Naive thymus-derived CD4-positive, alpha-beta T cell (primary cell): ENCODE measurements at regions of chr12 and their contacts with region 1.

Region 1: DNA sequence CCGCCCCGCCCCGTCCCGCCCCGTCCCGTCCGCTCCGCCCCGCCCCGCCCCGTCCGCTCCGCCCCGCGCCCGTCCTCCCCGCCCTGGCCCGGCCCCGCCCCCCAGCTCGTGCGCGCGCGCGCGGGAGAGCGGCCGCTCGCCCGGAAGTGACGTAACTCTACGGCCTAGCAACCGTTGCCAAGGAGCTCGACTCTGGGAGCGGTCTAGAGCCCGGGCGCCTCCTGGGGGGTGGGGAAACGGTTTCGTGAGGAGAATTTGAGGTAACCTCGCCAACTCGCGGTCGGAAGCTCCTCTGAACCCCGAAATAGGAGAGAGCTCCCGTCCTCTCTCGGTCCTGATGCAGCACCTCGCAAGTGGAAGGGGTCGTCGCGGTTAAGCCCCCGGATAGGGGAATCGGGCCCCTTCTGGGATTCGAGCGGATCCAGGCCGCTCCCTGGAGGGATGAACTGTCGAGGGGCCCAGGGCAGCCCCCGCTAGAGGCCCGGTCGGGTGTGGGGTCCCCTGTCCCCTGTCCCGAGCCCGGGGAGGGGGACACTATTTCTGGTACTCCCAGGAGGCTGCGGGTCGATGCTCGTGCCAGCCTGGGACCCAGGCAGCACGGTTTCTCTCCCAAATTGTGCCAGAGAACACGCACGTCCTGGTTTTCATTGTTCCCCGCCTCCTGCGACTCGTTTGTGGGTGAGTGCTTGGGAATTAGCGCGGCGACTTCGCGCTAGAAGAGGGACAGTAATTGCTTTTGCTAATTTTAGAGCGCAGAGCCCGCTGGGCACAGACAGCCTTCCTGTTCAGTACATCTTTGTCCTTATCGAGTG is at the start of gene IFT81:
- DNase-seq: peak; percentile 84 to 98 (median 93)
- ATAC-seq: peak; percentile 98
- H3K4me3 ChIP-seq: peak within 1 kb of the TSS; percentile 99
- H3K4me3 Mint-ChIP-seq: peak within 1 kb of the TSS; percentile 83 to 94 (median 92)
- H3K27ac ChIP-seq: peak within 1 kb of the TSS; percentile 84
- H3K27ac Mint-ChIP-seq: peak within 1 kb of the TSS; percentile 56 to 94 (median 90)
- H3K4me1 ChIP-seq: peaks cover 4 to 5% of the 10 kb centered on the region in 2 donors
- H3K4me1 Mint-ChIP-seq: peaks cover 0 to 9% (median 8%) of the 10 kb centered on the region in 7 donors
- H3K27me3 ChIP-seq: no peaks in the 10 kb centered on the region
- H3K27me3 Mint-ChIP-seq: peaks cover 0 to 52% (median 0%) of the 10 kb centered on the region in 5 donors
- total RNA-seq, gene IFT81: 0.66 to 1.3 (median 1.3) TPM

Region 2: DNA sequence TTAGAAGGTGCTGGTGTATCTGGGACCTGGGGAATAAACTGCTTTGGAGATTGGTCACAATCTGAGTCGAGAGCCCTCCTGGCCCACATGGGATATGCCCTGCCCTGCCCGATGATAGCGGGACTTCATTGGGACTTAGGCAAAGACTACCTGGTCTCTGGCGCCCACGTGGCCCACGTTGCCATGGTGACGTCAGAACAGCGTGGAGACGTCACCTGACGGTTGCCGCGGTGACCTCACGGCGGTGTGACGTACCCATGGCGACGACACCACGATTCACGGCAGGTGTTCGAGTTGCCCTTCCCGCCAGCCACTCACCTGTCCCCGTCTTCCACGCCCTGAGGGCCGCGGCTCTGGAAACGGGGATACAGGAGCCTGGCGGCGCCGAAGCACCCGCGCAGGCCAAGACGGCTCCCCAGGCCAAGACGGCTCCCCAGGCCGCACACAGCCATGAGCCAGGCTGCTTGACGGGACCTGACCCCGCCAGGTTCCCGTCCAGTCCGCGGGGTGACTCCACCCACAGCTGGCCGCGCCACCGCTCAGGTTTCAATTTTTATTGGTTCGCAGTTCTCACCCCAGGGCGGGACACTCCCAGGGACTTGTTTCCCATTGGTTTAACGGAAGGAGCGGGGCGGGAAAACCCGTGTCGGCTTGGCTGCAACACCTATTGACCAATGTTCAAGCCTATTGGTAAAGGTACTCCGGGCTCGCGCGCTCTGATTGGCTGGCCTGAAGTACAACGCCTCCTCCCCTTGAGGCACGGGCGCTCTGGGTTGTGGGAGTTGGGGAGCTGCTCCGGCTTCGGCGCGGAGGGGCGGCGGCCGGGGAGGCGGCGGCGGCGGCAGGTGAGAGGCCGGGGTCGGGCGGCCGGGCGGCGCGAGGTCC is 551.1 kb before region 1 on chr12 and contains the starts of genes MMAB and MVK:
- CTCF ChIA-PET with region 1: no interaction called
- POLR2A ChIA-PET with region 1: no interaction called
- intact Hi-C with region 1: loop called in 1 of 2 experiments (anchors 1 kb)
- DNase-seq: peak; percentile 87 to 99 (median 99)
- ATAC-seq: peak; percentile 97
- H3K4me3 ChIP-seq: peak within 1 kb of the TSS; percentile 75
- H3K4me3 Mint-ChIP-seq: peak within 1 kb of the TSS; percentile 90 to 97 (median 94)
- H3K27ac ChIP-seq: peak within 1 kb of the TSS; percentile 95
- H3K27ac Mint-ChIP-seq: peak within 1 kb of the TSS; percentile 87 to 100 (median 95)
- H3K4me1 ChIP-seq: peaks cover 13 to 16% of the 10 kb centered on the region in 2 donors
- H3K4me1 Mint-ChIP-seq: peaks cover 9 to 39% (median 36%) of the 10 kb centered on the region in 7 donors
- H3K27me3 ChIP-seq: no peaks in the 10 kb centered on the region
- H3K27me3 Mint-ChIP-seq: no peaks in the 10 kb centered on the region
- total RNA-seq, gene MMAB: 13.5 to 24.7 (median 20.1) TPM
- total RNA-seq, gene MVK: 10.0 to 14.8 (median 11.7) TPM

Region 3: DNA sequence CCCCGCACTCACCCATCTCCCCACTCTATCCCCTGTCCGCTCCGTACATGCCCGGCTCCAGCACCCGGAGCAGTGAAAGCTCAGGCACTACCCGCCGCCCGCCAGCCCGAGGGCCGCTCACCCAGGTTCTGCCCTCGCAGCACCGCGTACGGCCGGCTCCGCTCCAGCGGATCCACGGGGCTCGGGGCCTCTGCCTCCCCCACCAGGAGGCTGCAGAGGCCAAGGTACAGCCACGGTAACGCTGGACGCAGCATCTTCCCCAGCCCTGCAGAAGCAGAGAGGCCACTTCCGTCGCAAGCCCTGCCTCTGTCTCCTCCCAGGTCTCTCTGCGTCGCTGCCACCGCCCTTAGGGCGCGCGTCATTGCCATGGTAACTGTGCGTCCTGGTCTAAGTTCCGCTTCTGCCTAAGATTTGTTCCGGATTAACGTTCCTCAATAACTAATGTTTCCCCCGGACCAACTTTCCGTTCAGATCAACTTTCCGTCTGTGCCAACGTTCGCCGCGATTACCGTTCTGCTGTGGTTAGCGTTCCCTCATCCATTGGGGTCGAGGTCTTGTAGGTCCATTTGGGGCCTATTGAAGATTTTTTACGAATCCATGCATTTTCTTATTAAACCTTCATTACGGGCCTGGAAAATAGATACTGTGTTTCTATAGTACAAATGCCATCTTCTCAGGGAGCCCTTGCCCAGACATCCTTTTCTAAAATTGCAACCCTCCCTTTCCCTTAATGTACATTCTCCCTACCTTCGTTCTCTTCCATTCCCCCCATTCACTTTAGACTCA is 76.0 kb before region 1 on chr12 and contains the start of gene C12orf76:
- CTCF ChIA-PET with region 1: no interaction called
- POLR2A ChIA-PET with region 1: no interaction called
- intact Hi-C with region 1: loop called (anchors 1 kb)
- DNase-seq: peak; percentile 67 to 92 (median 90)
- ATAC-seq: peak; percentile 100
- H3K4me3 ChIP-seq: peak within 1 kb of the TSS; percentile 81
- H3K4me3 Mint-ChIP-seq: peak within 1 kb of the TSS; percentile 84 to 97 (median 93)
- H3K27ac ChIP-seq: peak within 1 kb of the TSS; percentile 77
- H3K27ac Mint-ChIP-seq: peak within 1 kb of the TSS; percentile 90 to 99 (median 96)
- H3K4me1 ChIP-seq: peaks cover 19% of the 10 kb centered on the region in 2 donors
- H3K4me1 Mint-ChIP-seq: peaks cover 16 to 46% (median 34%) of the 10 kb centered on the region in 7 donors
- H3K27me3 ChIP-seq: no peaks in the 10 kb centered on the region
- H3K27me3 Mint-ChIP-seq: no peaks in the 10 kb centered on the region
- total RNA-seq, gene C12orf76: 14.6 to 28.7 (median 27.8) TPM

Region 4: GRCh38 chr12:110088936-110089335 is 35.5 kb before region 1 on chr12:
- CTCF ChIA-PET with region 1: no interaction called
- POLR2A ChIA-PET with region 1: no interaction called
- intact Hi-C with region 1: no loop called
- DNase-seq: no peak
- ATAC-seq: peak; percentile 63
- H3K4me3 ChIP-seq: no peak overlapping the region
- H3K4me3 Mint-ChIP-seq: no peak overlapping the region
- H3K27ac ChIP-seq: no peak overlapping the region
- H3K27ac Mint-ChIP-seq: no peak overlapping the region
- H3K4me1 ChIP-seq: no peaks in the 10 kb centered on the region
- H3K4me1 Mint-ChIP-seq: peaks cover 0 to 9% (median 0%) of the 10 kb centered on the region in 7 donors
- H3K27me3 ChIP-seq: no peaks in the 10 kb centered on the region
- H3K27me3 Mint-ChIP-seq: peaks cover 0 to 63% (median 6%) of the 10 kb centered on the region in 5 donors

Region 5: GRCh38 chr12:110149086-110149660 is 24.8 kb after region 1 on chr12:
- CTCF ChIA-PET with region 1: no interaction called
- POLR2A ChIA-PET with region 1: interaction called, 3 read pairs
- intact Hi-C with region 1: loop called in 1 of 2 experiments (anchors 2 kb)
- DNase-seq: no peak
- ATAC-seq: no peak
- H3K4me3 ChIP-seq: no peak overlapping the region
- H3K4me3 Mint-ChIP-seq: peak overlapping the region in 1 of 10 donors; percentile 22
- H3K27ac ChIP-seq: no peak overlapping the region
- H3K27ac Mint-ChIP-seq: peak overlapping the region in 1 of 9 donors; percentile 24
- H3K4me1 ChIP-seq: no peaks in the 10 kb centered on the region
- H3K4me1 Mint-ChIP-seq: peaks cover 0 to 13% (median 7%) of the 10 kb centered on the region in 7 donors
- H3K27me3 ChIP-seq: no peaks in the 10 kb centered on the region
- H3K27me3 Mint-ChIP-seq: no peaks in the 10 kb centered on the region

Region 6: GRCh38 chr12:110403146-110403975 is 279.0 kb after region 1 on chr12 and contains the start of gene ANAPC7:
- CTCF ChIA-PET with region 1: no interaction called
- POLR2A ChIA-PET with region 1: no interaction called
- intact Hi-C with region 1: loop called in 1 of 2 experiments (anchors 2 kb)
- DNase-seq: peak; percentile 74 to 90 (median 87)
- ATAC-seq: peak; percentile 98
- H3K4me3 ChIP-seq: peak within 1 kb of the TSS; percentile 99
- H3K4me3 Mint-ChIP-seq: peak within 1 kb of the TSS in 9 of 10 donors; percentile 96 to 100 (median 98)
- H3K27ac ChIP-seq: peak within 1 kb of the TSS; percentile 81
- H3K27ac Mint-ChIP-seq: peak within 1 kb of the TSS; percentile 97 to 100 (median 99)
- H3K4me1 ChIP-seq: peaks cover 6 to 15% of the 10 kb centered on the region in 2 donors
- H3K4me1 Mint-ChIP-seq: peaks cover 15 to 50% (median 29%) of the 10 kb centered on the region in 7 donors
- H3K27me3 ChIP-seq: no peaks in the 10 kb centered on the region
- H3K27me3 Mint-ChIP-seq: no peaks in the 10 kb centered on the region
- total RNA-seq, gene ANAPC7: 40.9 to 71.7 (median 59.7) TPM